ENCODE measurements at regions of chr12 and their contacts with region 1.

Region 1: GRCh38 chr12:115870510-115870909 is 407.0 kb downstream of the MED13L start:
- DNase-seq: no peak
- CTCF ChIP-seq: no peak

Region 2: DNA sequence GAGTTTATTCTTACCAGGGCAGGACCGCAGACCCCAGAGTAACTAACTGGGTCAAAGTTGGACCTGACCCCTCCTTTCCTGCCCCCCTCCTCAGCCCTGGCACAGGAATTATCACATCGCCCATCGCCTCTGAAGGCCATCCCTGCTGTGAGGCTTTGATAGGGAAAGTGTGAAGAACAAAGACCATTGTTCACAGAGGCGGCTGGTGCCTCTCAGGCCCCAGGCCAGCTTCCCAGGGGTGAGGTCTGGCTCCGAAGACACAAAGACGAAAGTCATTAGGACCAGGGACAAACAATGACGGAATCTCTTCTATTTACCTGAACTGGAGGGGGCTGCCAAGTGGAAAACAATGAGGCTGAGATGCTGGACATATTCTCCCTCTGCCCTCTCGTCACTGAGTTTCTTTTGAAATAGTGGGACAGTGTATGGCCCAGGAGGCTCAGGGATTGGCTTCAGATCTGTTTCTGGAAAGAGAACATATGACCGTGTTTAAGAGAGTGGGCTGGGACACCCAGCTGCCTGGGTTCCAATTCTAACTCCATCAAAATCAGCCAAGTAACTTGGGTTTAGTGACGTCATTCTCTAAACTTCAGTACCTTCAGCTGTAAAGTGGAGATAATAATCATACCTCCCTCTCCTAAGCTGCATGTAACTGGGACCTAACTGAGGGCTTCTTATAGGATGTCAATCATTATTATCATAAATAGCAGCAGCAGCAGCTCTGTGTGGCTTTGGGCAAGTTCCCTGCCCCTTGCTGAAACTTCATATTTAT is 362.4 kb before region 1 on chr12:
- CTCF ChIA-PET with region 1: no interaction called
- POLR2A ChIA-PET with region 1: no interaction called
- DNase-seq: no peak
- CTCF ChIP-seq: no peak

Region 3: DNA sequence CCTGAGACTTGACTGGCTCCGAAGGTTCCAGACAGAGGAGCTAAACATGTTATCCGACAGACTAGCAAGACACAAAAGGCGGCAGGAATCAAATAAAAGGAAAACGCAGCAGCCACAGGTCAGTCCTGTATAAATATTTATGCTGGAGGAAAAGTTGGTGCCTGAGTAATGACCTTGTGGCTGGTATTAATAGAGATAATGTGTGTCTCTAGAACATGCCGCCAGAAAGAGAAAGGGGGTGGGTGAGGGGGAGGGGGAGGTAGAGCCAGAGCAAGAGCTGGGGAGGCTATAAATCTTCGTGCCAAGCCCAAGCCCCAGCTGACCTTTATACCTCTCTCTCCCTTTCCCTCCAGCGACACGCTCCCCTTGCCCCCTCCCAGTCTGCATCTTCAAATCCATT is 183.4 kb before region 1 on chr12:
- CTCF ChIA-PET with region 1: no interaction called
- POLR2A ChIA-PET with region 1: no interaction called
- DNase-seq: no peak
- CTCF ChIP-seq: no peak

Region 4: DNA sequence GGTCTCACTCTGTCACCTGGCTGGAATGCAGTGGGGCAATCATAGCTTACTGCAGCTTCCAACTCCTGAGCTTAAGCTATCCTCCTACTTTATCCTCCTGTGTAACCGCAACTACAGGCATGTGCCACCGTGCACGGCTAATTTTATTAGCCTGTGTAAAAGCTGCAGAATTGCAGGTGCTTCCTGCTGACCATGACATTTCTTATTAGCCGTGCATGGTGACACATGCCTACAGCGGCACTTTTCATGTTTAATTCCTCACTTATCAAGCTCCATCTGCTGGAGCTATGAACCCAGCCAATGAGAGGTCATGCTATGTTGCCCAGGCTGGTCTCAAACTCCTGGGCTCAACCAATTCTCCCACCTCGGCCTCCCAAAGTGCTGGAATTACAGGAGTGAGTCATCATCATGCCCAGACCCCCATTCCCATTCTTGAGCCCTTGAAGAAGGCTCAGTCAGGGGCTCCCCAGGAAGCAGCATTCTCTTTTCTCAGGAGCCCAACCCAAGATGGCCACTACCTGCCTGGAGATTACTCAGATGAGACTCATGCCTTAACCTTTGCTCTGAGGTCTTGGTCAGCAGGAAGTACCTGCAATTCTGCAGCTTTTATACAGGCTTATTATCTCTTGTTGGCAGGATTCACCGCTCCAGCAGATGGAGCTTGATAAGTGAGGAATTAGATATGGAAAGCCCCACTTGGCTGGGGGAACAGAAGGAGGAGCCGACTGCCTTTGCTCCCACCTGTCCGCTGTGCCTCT is 96.2 kb before region 1 on chr12:
- CTCF ChIA-PET with region 1: no interaction called
- POLR2A ChIA-PET with region 1: no interaction called
- DNase-seq: no peak
- CTCF ChIP-seq: no peak

Region 5: GRCh38 chr12:115859231-115859630 is 11.3 kb before region 1 on chr12:
- CTCF ChIA-PET with region 1: interaction called, 10 read pairs
- POLR2A ChIA-PET with region 1: no interaction called
- DNase-seq: no peak
- CTCF ChIP-seq: no peak

Measured in GM10248 (cell line).